ENCODE measurements at regions of chr17 and their contacts with region 1.

Region 1: DNA sequence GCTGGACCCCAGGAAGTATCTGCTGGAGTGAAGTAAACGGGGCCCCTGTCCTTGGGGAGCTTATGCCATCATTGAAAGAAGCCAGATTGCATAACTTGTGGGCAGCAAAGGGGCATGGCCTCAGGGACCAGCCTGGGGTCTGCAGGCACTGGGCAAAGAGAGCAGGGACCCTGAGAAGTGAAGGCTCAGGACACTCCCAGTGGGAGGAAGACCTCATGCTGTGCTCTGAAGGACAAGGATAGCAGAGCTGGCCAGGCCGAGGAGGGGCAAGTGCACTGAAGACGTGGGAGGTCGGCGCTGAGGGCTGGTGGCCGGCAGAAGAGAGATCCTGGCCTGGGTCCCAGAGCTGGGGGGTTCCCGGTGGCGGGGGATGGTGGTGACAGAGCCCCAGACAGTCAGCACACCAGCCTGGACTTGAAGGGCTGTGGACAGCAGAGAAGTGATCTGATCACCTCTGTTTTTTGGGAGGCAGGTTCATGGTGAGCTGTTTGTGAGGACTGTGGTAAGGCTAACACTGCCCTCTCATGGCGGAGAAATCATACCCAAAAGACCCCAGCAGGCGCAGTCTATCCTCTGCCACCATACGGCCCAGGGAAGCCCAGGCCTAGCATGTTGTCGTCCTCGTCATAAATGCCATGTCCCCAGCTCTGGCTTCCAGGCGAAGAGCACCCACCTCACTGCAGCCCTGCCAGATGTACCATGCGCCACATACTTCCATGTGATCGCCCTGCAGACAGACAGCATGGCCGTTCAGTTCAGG is 7.1 kb upstream of the CNP start:
- DNase-seq: peak in 1 of 2 experiments; percentile 68
- H3K4me3 ChIP-seq: 0 out of 8 replicates have a peak overlapping the region, but pooled peaks of 1 of the 4 experiments have one; percentile 7
- H3K27ac ChIP-seq: peak overlapping the region; percentile 13; the same call in 1 of the 2 replicates
- H3K4me1 ChIP-seq: peaks cover 6 to 16% (median 11%) of the 10 kb centered on the region in 4 experiments
- H3K27me3 ChIP-seq: no peaks in the 10 kb centered on the region
- CTCF ChIP-seq: peak; percentile 66 to 87 (median 86)
- EP300 ChIP-seq: no peak
- POLR2A ChIP-seq: no peak
- RAD21 ChIP-seq: peak; percentile 78 to 85

Region 2: DNA sequence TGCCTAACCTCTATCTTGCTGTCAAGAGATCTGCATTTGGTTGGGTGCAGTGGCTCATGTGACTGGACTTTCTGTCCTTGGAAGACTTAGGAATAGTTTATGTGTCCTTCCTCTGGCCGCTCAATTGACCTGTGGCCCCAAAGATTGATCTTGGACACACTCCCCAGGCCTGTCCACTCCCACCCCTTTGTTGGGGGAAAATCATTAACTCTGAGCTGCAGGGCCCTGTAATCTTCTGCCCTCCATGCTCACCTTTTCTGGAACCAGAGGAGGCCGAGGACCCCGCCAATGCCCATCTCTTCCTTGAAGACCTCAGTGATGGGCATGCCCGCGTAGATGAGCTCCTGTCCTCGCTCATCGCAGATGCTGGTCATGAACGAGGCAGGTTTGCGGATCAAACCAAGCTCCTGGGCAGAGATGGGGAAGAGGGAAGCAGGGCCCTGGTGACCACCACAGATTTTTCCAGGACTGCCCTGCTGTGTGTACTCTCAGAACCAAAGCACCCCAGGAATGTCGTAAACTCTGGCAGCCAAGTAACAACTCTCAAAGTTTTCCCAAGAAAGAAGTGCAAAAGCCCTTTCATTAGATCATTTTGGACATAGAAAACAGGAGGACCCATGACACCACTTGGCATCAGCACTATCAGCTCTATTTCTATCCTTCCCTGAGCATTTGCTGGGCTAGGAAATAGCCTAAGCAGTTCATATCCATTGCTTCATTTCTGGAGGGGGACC is 85.8 kb before region 1 on chr17:
- CTCF ChIA-PET with region 1: no interaction called
- POLR2A ChIA-PET with region 1: no interaction called
- DNase-seq: no peak
- H3K4me3 ChIP-seq: no peak overlapping the region
- H3K27ac ChIP-seq: no peak overlapping the region
- H3K4me1 ChIP-seq: no peaks in the 10 kb centered on the region
- H3K27me3 ChIP-seq: no peaks in the 10 kb centered on the region; a peak in 1 of 7 replicates
- CTCF ChIP-seq: no peak
- EP300 ChIP-seq: no peak
- POLR2A ChIP-seq: no peak
- RAD21 ChIP-seq: no peak

Region 3: GRCh38 chr17:41901646-41902045 is 57.9 kb before region 1 on chr17:
- CTCF ChIA-PET with region 1: interaction called, 13 read pairs
- POLR2A ChIA-PET with region 1: no interaction called
- DNase-seq: no peak
- H3K4me3 ChIP-seq: no peak overlapping the region
- H3K27ac ChIP-seq: no peak overlapping the region
- H3K4me1 ChIP-seq: no peaks in the 10 kb centered on the region
- H3K27me3 ChIP-seq: no peaks in the 10 kb centered on the region
- CTCF ChIP-seq: no peak
- EP300 ChIP-seq: no peak
- POLR2A ChIP-seq: no peak
- RAD21 ChIP-seq: no peak

Region 4: DNA sequence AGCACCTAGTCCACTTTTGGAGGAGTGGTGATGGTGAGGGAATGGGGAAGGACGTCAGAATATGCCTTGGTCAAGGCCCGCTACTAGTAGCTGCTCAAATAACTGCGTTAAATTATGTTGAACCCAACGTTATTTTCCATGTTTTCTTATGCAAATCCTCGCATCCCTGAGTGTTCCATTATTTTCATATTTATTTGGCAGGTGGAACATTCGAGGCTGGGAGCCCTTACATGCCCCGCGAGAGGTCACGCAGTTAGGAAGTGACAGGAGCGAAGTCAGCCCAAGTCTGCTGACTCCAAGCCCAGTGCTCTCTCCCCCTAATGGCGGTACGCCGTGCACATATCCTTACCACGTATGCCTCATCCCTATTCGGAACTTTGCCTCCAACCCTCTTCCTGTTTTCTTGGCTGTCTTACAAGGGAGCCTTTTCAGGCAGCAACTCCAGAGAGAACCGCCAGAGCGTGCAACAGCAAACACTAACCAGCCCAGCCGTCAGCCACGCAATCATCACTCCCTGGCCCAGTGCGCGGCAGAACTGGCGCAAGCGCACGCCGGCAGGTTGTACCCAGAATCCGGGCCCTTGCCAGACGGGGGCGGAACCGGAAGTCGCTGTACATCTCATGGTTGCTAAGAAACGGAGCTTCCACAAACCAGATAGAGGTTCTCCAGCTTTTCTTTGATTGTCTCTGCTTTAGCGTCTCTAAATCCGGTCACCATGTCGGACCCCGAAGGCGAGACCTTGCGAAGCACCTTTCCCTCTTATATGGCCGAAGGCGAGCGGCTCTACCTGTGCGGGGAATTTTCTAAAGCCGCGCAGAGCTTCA is 29.3 kb before region 1 on chr17 and contains the start of gene ODAD4:
- CTCF ChIA-PET with region 1: interaction called, 35 read pairs
- POLR2A ChIA-PET with region 1: interaction called, 15 read pairs
- DNase-seq: peak; percentile 77 to 92
- H3K4me3 ChIP-seq: peak within 1 kb of the TSS; percentile 71 to 81 (median 75)
- H3K27ac ChIP-seq: peak within 1 kb of the TSS; percentile 28
- H3K4me1 ChIP-seq: peaks cover 0 to 4% (median 2%) of the 10 kb centered on the region in 4 experiments; a peak in 2 of 7 replicates
- H3K27me3 ChIP-seq: no peaks in the 10 kb centered on the region
- CTCF ChIP-seq: peak in 2 of 3 experiments; percentile 30 to 47; a peak in 3 of 4 replicates
- EP300 ChIP-seq: no peak
- POLR2A ChIP-seq: peak in 1 of 2 experiments; percentile 84; a peak in 2 of 3 replicates
- RAD21 ChIP-seq: peak; percentile 36 to 46
- total RNA-seq, gene ODAD4: 1.3 TPM in 2 replicates

Region 5: GRCh38 chr17:41944943-41945342 is 14.6 kb before region 1 on chr17:
- CTCF ChIA-PET with region 1: interaction called, 19 read pairs
- POLR2A ChIA-PET with region 1: interaction called, 13 read pairs
- DNase-seq: no peak
- H3K4me3 ChIP-seq: no peak overlapping the region
- H3K27ac ChIP-seq: no peak overlapping the region
- H3K4me1 ChIP-seq: no peaks in the 10 kb centered on the region
- H3K27me3 ChIP-seq: no peaks in the 10 kb centered on the region
- CTCF ChIP-seq: no peak
- EP300 ChIP-seq: no peak
- POLR2A ChIP-seq: no peak
- RAD21 ChIP-seq: no peak

Region 6: DNA sequence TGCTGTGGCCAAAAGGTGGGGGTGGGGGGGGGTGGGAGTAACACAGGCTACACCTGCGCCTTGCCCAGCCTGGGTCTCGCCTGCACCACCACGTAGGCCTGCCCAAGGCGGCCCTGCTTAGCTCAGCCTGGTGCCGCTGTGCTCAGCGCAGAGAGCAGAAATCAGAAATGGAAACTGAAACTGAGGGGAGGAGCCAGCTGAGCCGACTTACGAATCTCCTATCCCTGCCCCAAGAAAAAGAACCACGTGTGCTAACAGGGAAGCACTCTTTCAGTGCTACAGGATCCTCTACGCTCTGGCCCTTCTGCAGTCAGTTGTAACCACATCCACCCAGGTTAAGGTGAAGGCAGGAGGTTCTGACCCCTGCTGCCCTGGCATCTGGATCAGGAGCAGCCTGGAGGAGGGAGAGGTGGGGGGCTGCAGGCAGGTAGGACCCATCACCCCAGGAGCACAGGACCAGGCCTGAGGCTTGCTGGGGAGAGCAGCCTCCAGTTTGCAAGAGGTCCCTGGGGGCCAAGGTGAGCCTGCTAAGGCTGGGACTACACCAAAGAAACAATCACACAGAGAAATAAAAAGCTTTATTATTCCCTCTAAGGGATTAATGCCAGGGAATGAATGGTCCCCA is 153.1 kb after region 1 on chr17 and contains the start of gene DHX58:
- CTCF ChIA-PET with region 1: interaction called, 32 read pairs
- POLR2A ChIA-PET with region 1: no interaction called
- DNase-seq: no peak
- H3K4me3 ChIP-seq: no peak within 1 kb of the TSS
- H3K27ac ChIP-seq: no peak within 1 kb of the TSS
- H3K4me1 ChIP-seq: peaks cover 0 to 18% (median 10%) of the 10 kb centered on the region in 4 experiments; a peak in 6 of 7 replicates
- H3K27me3 ChIP-seq: no peaks in the 10 kb centered on the region
- CTCF ChIP-seq: no peak
- EP300 ChIP-seq: no peak
- POLR2A ChIP-seq: no peak
- RAD21 ChIP-seq: no peak
- total RNA-seq, gene DHX58: 4.4 and 5.6 TPM in 2 replicates